AG04449 (cell line): ENCODE measurements at regions of chr13 and their contacts with region 1.

Region 1: DNA sequence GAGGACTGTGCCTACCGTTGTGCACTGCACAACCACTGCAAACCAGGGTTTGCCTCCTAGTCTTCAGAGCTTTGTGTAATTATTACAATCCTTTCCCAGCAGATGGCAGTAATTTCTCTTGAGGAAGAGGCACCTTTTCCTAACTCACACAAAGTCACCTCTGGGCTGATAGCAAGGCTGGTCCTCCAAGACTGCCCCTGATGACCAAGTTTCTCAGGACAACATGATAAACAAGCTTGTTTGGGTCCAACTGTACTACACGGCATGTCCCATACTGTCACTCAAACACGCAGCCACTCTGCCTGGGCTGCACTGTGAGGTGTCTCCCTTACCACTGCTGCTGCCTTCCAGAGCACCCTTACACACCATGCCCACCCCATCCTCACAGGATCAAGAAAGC is 39.3 kb downstream of the RFXAP start:
- DNase-seq: no peak
- H3K4me3 ChIP-seq: no peak overlapping the region
- CTCF ChIP-seq: peak; percentile 38

Region 2: GRCh38 chr13:36872621-36873020 is 14.3 kb after region 1 on chr13:
- CTCF ChIA-PET with region 1: interaction called, 42 read pairs
- POLR2A ChIA-PET with region 1: no interaction called
- DNase-seq: no peak
- H3K4me3 ChIP-seq: no peak overlapping the region
- CTCF ChIP-seq: no peak

Region 3: DNA sequence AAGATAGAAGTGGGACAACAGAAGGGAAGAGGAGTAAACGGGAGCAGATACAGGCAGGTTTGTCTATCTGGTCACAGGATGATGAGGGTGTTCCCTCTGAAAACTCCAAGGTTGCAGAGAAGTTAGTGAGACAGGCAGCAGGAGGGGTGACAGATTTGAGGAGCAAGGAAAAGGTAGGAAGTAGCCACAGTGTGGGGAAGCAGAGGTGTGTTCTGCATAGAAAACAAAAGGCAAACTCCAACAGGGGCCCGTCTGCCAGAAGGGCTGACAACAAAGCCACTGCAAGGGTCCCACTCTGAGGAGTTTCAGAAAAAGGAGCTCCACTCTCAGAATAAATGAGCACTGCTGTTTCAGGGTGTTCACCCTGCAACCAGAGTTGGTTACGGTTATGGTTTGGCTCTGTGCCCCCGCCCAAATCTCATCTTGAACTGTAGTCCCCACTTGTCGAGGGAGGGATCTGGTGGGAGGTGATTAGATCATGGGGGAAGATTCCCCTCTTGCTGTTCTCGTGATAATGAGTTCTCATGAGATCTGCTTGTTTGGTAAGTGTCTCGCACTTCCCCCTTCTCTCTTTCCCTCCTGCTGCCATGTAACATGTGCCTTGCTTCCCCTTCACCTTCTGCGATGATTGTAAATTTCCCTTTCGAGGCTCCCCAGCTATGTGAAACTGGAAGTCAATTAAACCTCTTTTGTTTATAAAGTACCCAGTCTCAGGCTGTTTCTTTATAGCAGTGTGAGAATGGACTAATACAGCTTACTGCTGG is 29.6 kb after region 1 on chr13:
- CTCF ChIA-PET with region 1: interaction called, 16 read pairs
- POLR2A ChIA-PET with region 1: no interaction called
- DNase-seq: no peak
- H3K4me3 ChIP-seq: no peak overlapping the region
- CTCF ChIP-seq: no peak

Region 4: DNA sequence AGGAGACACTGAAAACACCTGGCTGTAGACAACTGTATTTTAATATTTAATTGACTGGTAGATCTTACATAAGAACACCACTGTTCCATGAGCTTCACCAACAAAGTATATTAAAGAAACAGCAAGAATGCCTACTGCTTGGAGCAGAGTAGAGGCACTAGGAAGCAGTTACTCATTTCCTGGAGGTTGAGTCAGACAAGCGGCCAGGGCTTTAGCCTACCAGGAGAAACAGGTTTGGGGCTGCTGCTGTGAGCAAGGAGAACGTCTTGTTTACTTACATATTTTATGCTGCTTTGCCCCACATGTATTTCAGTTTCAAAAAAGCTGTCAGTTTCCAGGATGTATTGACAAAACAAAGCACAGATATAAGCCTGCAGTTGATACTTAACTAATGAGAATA is 107.5 kb after region 1 on chr13:
- CTCF ChIA-PET with region 1: interaction called, 20 read pairs
- POLR2A ChIA-PET with region 1: no interaction called
- DNase-seq: peak; percentile 41
- H3K4me3 ChIP-seq: no peak overlapping the region
- CTCF ChIP-seq: no peak

Region 5: DNA sequence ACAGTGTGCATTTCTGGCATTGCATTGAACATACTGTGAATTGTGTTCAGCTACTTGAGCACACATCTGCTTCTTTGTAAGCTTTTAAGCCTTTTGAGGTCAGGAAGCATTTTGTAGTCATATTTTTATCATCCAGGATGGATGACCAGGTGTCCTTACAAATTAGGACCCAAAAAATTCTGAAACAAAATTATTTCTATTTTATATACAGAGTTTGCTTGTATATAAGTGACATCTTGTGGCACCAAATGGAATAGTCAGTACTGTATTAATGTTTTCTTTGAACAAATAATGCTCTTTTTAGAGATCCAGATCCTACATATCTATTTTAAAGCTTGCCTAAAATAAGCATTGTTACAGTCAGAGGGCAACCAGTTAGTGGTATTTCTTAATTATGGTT is 210.7 kb after region 1 on chr13:
- CTCF ChIA-PET with region 1: interaction called, 30 read pairs
- POLR2A ChIA-PET with region 1: no interaction called
- DNase-seq: no peak
- H3K4me3 ChIP-seq: no peak overlapping the region
- CTCF ChIP-seq: no peak

Region 6: GRCh38 chr13:37303606-37304005 is 445.3 kb after region 1 on chr13:
- CTCF ChIA-PET with region 1: no interaction called
- POLR2A ChIA-PET with region 1: no interaction called
- DNase-seq: no peak
- H3K4me3 ChIP-seq: no peak overlapping the region
- CTCF ChIP-seq: no peak